Aorta (tissue), 5 donors: ENCODE measurements at regions of chr10 and their contacts with region 1.

Region 1: DNA sequence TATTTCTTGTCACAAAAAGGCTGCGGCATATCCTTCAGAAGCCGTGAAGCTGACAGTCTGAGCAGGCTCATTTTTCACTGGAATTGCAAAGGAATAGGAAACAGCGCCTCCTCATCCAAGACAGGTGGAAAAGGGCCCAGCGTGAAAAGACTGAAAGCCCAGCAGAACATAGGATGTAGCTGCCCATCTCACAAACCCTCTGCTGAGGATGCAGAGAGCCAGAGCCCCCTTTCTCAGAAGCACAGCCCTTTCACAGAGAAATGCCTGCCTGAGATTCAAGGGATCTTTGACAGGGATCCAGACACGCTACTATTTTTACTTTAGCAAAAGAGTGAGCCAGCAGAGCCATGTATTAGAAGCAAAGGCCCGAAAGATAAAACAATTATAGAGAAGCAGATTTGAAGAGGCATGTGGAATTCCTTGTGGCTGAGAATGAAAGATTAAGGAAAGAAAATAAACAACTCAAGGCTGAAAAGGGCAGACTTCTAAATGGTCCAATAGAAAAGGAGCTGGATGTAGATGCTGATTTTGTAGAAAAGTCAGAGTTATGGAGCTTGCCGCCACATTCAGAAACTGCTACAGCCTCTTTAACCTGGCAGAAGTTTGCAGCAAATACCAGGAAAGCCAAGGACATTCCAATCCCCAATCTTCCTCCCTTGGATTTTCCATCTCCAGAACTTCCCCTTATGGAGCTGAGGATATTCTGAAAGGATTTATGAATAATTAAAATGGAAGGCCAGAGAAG is 36.9 kb downstream of the GDI2 start:
- DNase-seq: no peak
- ATAC-seq: peak; percentile 15
- H3K4me3 ChIP-seq: no peak overlapping the region
- H3K27ac ChIP-seq: peak overlapping the region; percentile 34 to 52
- H3K4me1 ChIP-seq: no peaks in the 10 kb centered on the region
- H3K27me3 ChIP-seq: no peaks in the 10 kb centered on the region

Region 2: GRCh38 chr10:5666008-5666829 is 110.1 kb before region 1 on chr10 and contains the start of gene ASB13:
- intact Hi-C with region 1: loop called in 1 of 2 experiments (anchors 10 kb)
- DNase-seq: peak; percentile 84 to 91
- ATAC-seq: peak; percentile 93
- H3K4me3 ChIP-seq: peak within 1 kb of the TSS; percentile 70 to 80
- H3K27ac ChIP-seq: peak within 1 kb of the TSS; percentile 0 to 72
- H3K4me1 ChIP-seq: peaks cover 0 to 2% of the 10 kb centered on the region in 2 donors
- H3K27me3 ChIP-seq: no peaks in the 10 kb centered on the region
- total RNA-seq, gene ASB13: 23.2 to 25.0 TPM